ENCODE measurements at regions of chr2 and their contacts with region 1.

Region 1: GRCh38 chr2:76849086-76849485 is 673.1 kb downstream of the LRRTM4 start:
- DNase-seq: no peak
- ATAC-seq: no peak
- H3K4me3 Mint-ChIP-seq: no peak overlapping the region
- H3K27ac Mint-ChIP-seq: no peak overlapping the region
- H3K4me1 Mint-ChIP-seq: no peaks in the 10 kb centered on the region
- H3K27me3 Mint-ChIP-seq: no peaks in the 10 kb centered on the region

Region 2: GRCh38 chr2:76812156-76812555 is 36.9 kb before region 1 on chr2:
- CTCF ChIA-PET with region 1: no interaction called
- POLR2A ChIA-PET with region 1: no interaction called
- intact Hi-C with region 1: no loop called
- DNase-seq: no peak
- ATAC-seq: no peak
- H3K4me3 Mint-ChIP-seq: no peak overlapping the region
- H3K27ac Mint-ChIP-seq: no peak overlapping the region
- H3K4me1 Mint-ChIP-seq: no peaks in the 10 kb centered on the region
- H3K27me3 Mint-ChIP-seq: no peaks in the 10 kb centered on the region

Region 3: DNA sequence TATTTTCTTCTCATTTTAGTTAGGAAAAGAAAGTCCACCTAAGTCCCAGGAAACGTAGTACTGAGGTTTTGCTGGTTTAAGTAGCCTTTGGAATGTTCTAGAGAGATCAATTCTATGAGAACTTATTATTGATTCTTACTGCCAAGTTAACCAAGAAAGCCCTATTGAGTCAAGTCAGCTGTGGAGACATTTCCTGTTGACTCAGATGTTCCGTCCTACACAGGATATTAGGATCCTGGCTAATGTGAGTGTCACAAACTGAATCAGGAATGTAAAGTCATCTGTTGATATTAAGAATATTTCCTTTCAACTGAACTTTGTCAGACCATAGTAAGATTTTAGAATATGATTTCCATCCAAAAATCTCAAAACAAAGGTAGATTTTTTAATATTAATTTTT is 18.8 kb after region 1 on chr2:
- CTCF ChIA-PET with region 1: no interaction called
- POLR2A ChIA-PET with region 1: no interaction called
- intact Hi-C with region 1: loop called in 1 of 2 experiments (anchors 2 kb)
- DNase-seq: no peak
- ATAC-seq: no peak
- H3K4me3 Mint-ChIP-seq: no peak overlapping the region
- H3K27ac Mint-ChIP-seq: no peak overlapping the region
- H3K4me1 Mint-ChIP-seq: no peaks in the 10 kb centered on the region
- H3K27me3 Mint-ChIP-seq: no peaks in the 10 kb centered on the region

Region 4: GRCh38 chr2:76985387-76986136 is 136.5 kb after region 1 on chr2:
- CTCF ChIA-PET with region 1: no interaction called
- POLR2A ChIA-PET with region 1: no interaction called
- intact Hi-C with region 1: no loop called
- DNase-seq: no peak
- ATAC-seq: no peak
- H3K4me3 Mint-ChIP-seq: no peak overlapping the region
- H3K27ac Mint-ChIP-seq: no peak overlapping the region
- H3K4me1 Mint-ChIP-seq: no peaks in the 10 kb centered on the region
- H3K27me3 Mint-ChIP-seq: no peaks in the 10 kb centered on the region

Region 5: GRCh38 chr2:77018219-77018618 is 169.1 kb after region 1 on chr2:
- CTCF ChIA-PET with region 1: no interaction called
- POLR2A ChIA-PET with region 1: no interaction called
- intact Hi-C with region 1: no loop called
- DNase-seq: no peak
- ATAC-seq: no peak
- H3K4me3 Mint-ChIP-seq: no peak overlapping the region
- H3K27ac Mint-ChIP-seq: no peak overlapping the region
- H3K4me1 Mint-ChIP-seq: no peaks in the 10 kb centered on the region
- H3K27me3 Mint-ChIP-seq: no peaks in the 10 kb centered on the region